ENCODE measurements at regions of chr3 and their contacts with region 1.

Region 1: GRCh38 chr3:150721285-150722130 is 17.8 kb upstream of the ERICH6 start:
- DNase-seq: peak; percentile 73
- CTCF ChIP-seq: peak; percentile 68

Region 2: GRCh38 chr3:149638228-149639092 is 1083.0 kb before region 1 on chr3:
- CTCF ChIA-PET with region 1: no interaction called
- POLR2A ChIA-PET with region 1: no interaction called
- DNase-seq: no peak
- CTCF ChIP-seq: no peak

Region 3: DNA sequence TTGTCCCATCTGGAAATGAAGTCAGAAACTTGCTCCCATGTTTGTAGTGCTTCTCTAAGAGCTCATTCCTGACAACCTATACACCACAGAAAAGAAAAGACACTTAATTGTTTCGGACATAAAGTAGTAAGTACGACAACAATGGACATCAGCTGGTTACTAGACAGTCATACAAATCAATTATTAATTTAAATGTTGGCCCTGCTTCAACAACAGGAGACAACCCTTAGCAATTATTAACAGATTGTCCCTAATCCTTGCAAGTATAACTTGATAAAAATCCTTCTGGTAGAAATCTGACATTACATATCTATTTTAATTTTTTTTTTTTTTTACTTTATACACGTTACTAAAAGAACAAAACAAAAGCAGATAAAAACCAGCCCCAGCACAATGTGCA is 47.5 kb before region 1 on chr3:
- CTCF ChIA-PET with region 1: no interaction called
- POLR2A ChIA-PET with region 1: no interaction called
- DNase-seq: no peak
- CTCF ChIP-seq: no peak

Region 4: DNA sequence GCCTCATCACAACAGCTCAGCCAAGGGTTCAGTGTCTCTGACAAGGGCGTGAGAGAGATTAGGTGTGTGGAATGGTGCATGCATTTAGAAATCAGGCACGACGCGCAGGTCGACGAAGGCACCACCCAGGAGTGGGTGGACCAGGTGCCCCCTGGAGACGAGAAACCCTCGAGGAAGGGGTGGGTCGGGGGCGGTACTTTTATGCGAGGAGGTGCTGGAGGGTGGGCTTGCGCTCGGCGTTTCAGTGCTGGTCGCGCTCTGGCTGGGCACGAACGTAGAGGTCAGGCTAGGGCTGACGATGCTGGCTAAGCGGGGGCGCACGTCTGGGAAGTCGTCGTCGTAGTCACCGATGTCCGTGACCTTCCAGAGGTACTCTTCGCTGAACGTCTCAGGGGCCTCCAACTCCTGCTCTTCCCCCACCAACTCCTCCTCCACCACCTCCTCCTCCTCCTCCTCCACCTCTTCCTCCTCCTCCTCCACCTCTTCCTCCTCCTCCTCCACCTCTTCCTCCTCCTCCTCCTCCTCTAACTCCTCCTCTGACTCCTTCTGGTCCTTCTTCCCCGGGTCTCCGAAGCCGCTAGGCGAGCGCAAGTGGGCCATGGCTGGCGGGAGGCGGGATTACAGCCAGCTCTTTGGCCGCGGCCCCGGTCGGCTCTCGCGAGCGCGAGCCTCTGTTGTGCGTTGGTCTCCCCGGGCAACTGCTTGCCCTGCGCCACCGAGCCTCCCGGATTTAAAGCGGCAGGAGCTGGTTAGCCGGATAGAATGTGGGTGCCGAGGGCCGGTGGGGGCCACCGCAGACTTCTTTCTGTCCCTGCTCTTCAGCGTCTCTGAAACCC is 18.0 kb before region 1 on chr3 and contains the start of gene ERICH6:
- CTCF ChIA-PET with region 1: interaction called, 13 read pairs
- POLR2A ChIA-PET with region 1: no interaction called
- DNase-seq: peak; percentile 93
- CTCF ChIP-seq: no peak

Region 5: GRCh38 chr3:150737874-150738713 is 16.6 kb after region 1 on chr3:
- CTCF ChIA-PET with region 1: interaction called, 33 read pairs
- POLR2A ChIA-PET with region 1: no interaction called
- DNase-seq: no peak
- CTCF ChIP-seq: no peak

Region 6: GRCh38 chr3:150787741-150788370 is 66.3 kb after region 1 on chr3:
- CTCF ChIA-PET with region 1: interaction called, 17 read pairs
- POLR2A ChIA-PET with region 1: no interaction called
- DNase-seq: peak; percentile 60
- CTCF ChIP-seq: peak; percentile 97

Measured in GM10248 (cell line).